ENCODE measurements at regions of chr12 and their contacts with region 1.

Region 1: GRCh38 chr12:106919910-106920544 is 35.7 kb upstream of the TMEM263 start:
- DNase-seq: peak; percentile 64
- ATAC-seq: no peak
- H3K4me3 ChIP-seq: no peak overlapping the region
- H3K4me3 Mint-ChIP-seq: no peak overlapping the region
- H3K27ac ChIP-seq: no peak overlapping the region
- H3K27ac Mint-ChIP-seq: no peak overlapping the region
- H3K4me1 ChIP-seq: peaks cover 0 to 18% of the 10 kb centered on the region in 2 donors
- H3K4me1 Mint-ChIP-seq: no peaks in the 10 kb centered on the region
- H3K27me3 ChIP-seq: peaks cover 11 to 82% (median 72%) of the 10 kb centered on the region in 4 experiments
- H3K27me3 Mint-ChIP-seq: peaks cover 84% of the 10 kb centered on the region
- CTCF ChIP-seq: peak; percentile 96

Region 2: DNA sequence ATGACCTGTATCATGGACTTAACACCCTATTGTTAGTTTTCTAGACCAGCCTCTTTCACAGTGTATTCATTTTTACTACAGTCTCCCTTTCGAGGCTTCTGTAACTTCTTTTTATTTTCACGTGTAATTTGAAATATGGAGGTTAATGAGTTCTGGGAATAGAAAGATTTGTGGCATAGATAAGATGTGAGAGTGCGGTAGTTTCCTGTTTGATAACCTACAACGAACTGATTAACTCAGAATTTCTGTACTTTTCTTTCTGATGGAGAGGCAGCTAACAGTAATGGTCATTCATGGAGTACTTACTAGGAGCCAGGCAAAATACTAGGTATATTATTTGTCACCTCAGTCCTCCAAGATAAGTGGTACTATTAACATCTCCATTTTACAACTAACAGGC is 541.2 kb before region 1 on chr12:
- CTCF ChIA-PET with region 1: interaction called, 15 read pairs
- POLR2A ChIA-PET with region 1: no interaction called
- intact Hi-C with region 1: no loop called
- DNase-seq: no peak
- ATAC-seq: no peak
- H3K4me3 ChIP-seq: no peak overlapping the region
- H3K4me3 Mint-ChIP-seq: no peak overlapping the region
- H3K27ac ChIP-seq: no peak overlapping the region
- H3K27ac Mint-ChIP-seq: no peak overlapping the region
- H3K4me1 ChIP-seq: no peaks in the 10 kb centered on the region
- H3K4me1 Mint-ChIP-seq: no peaks in the 10 kb centered on the region
- H3K27me3 ChIP-seq: no peaks in the 10 kb centered on the region
- H3K27me3 Mint-ChIP-seq: no peaks in the 10 kb centered on the region
- CTCF ChIP-seq: no peak

Region 3: DNA sequence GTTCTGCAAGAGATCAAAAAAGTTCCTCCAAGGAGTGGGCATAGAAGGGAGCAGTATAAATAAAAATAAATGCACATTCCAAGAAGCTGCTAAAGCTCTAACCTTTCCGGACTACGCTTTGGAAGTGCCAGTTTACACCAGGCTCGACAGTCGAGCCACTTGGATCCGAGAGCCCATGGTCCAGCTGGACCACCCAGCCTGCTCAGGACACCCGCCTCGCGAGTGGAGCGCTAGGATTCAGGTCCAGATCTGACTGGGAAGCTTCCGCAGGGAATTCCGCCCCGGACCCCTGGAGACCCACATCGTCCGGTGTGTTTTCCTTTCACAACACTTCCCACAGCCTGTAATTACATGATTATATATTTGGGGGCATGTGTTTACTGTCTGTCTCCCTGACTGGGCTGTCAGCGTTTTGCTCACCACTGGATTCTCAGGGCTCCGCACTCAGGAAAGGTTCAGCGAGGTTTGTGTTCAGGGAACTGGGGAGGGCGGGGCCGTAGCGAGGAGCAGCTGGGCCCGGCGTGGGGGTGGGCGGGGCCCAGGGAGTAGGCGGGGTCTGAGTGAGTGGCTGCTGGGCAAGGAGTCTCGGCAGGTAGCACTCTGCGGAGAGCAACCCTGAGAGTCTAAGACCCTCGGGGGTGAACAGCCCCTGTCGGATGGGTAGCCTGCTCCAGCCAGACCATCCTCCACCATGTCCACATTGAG is 16.6 kb before region 1 on chr12:
- CTCF ChIA-PET with region 1: interaction called, 10 read pairs
- POLR2A ChIA-PET with region 1: no interaction called
- intact Hi-C with region 1: no loop called
- DNase-seq: peak; percentile 44
- ATAC-seq: peak; percentile 62
- H3K4me3 ChIP-seq: no peak overlapping the region
- H3K4me3 Mint-ChIP-seq: no peak overlapping the region
- H3K27ac ChIP-seq: no peak overlapping the region
- H3K27ac Mint-ChIP-seq: no peak overlapping the region
- H3K4me1 ChIP-seq: peaks cover 4 to 20% of the 10 kb centered on the region in 2 donors
- H3K4me1 Mint-ChIP-seq: peaks cover 5% of the 10 kb centered on the region
- H3K27me3 ChIP-seq: peaks cover 8 to 87% (median 76%) of the 10 kb centered on the region in 4 experiments
- H3K27me3 Mint-ChIP-seq: peaks cover 81% of the 10 kb centered on the region
- CTCF ChIP-seq: no peak

Region 4: GRCh38 chr12:107093417-107094182 is 173.6 kb after region 1 on chr12 and contains the start of gene CRY1:
- CTCF ChIA-PET with region 1: no interaction called
- POLR2A ChIA-PET with region 1: no interaction called
- intact Hi-C with region 1: no loop called
- DNase-seq: peak; percentile 94
- ATAC-seq: peak; percentile 84
- H3K4me3 ChIP-seq: peak within 1 kb of the TSS; percentile 54 to 83 (median 79)
- H3K4me3 Mint-ChIP-seq: no peak within 1 kb of the TSS
- H3K27ac ChIP-seq: peak within 1 kb of the TSS; percentile 95 to 96
- H3K27ac Mint-ChIP-seq: no peak within 1 kb of the TSS
- H3K4me1 ChIP-seq: peaks cover 16 to 24% of the 10 kb centered on the region in 2 donors
- H3K4me1 Mint-ChIP-seq: peaks cover 9% of the 10 kb centered on the region
- H3K27me3 ChIP-seq: peaks cover 0 to 8% (median 3%) of the 10 kb centered on the region in 4 experiments
- H3K27me3 Mint-ChIP-seq: peaks cover 19% of the 10 kb centered on the region
- CTCF ChIP-seq: no peak
- total RNA-seq, gene CRY1: 8.8 and 10.4 TPM in 2 replicates